Activated CD4-positive, alpha-beta T cell treated with anti-CD3 and anti-CD28 coated beads, Interleukin-2, amount 10 ng/mL, durations not matched to agents 24 days and 14 days (primary cell): ENCODE measurements at regions of chr1 and their contacts with region 1.

Region 1: DNA sequence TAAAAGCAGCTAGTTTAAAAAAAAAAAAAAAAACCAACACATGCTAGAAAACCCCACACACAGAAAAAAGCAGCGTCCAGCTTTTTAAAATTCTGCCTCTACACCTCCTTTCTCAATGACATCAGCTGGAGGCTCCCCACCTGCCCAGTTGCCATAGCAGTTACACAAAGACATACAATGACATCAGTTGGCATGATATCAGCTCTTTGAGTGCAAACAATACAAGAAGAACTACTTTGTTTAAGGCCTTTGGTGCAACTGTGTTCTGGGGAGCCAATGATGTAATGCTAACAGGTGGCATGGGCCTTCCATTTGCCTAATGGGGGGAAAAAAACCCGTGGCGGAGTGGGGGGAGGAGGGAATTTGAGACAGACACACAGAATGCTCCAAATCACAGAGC is 32.9 kb downstream of the DUSP10 start:
- DNase-seq: peak; percentile 85
- H3K4me3 Mint-ChIP-seq: peak overlapping the region; percentile 28
- H3K27ac Mint-ChIP-seq: peak overlapping the region; percentile 90
- H3K4me1 Mint-ChIP-seq: peaks cover 63% of the 10 kb centered on the region
- H3K27me3 Mint-ChIP-seq: no peaks in the 10 kb centered on the region

Region 2: GRCh38 chr1:221435504-221435904 is 273.5 kb before region 1 on chr1:
- intact Hi-C with region 1: loop called (anchors 1 kb)
- DNase-seq: peak; percentile 67
- H3K4me3 Mint-ChIP-seq: no peak overlapping the region
- H3K27ac Mint-ChIP-seq: no peak overlapping the region
- H3K4me1 Mint-ChIP-seq: peaks cover 22% of the 10 kb centered on the region
- H3K27me3 Mint-ChIP-seq: peaks cover 11% of the 10 kb centered on the region

Region 3: DNA sequence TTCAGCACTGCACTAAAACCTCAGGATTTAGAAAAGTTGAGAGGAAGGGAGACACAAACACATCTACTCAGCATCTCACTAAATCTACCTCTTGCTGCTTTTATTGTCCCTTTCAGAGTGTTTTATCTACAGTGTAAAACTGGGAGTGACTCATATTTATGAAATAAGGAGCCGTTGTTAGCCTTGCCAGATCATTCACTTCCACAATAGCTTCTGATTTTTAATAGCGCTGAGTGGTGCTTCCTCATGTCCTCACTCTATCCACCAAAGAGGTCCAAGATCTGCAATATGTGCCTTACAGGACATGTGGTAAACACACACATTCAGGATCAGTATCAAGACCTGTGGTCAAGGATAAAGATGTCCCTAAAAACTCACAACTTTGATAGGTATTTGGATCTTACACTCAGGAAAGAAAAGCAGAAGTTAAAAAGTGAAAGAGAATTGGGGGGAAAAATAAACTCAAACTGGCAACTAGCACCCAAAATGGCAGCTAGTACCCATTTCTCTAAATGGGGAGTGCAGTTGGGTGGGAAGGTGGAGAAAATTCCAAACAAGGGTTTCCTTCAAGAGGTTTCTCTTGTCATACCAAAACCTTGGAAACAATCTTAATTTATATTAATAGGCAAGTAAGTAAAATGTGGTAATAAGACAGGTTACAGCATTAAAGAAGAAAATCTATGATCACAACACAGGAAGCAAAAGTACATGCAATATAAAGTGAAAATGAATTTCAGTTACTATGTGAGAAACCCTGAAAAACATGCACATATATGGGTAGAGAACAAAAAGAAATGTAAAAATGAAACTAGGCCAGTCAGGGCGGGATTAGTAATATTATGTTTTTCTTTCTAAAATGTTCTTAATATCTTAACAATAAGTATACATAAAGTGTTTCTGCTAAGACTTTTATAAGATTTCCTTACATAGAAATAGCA is 17.0 kb after region 1 on chr1:
- intact Hi-C with region 1: loop called (anchors 1 kb)
- DNase-seq: no peak
- H3K4me3 Mint-ChIP-seq: peak overlapping the region; percentile 65
- H3K27ac Mint-ChIP-seq: peak overlapping the region; percentile 93
- H3K4me1 Mint-ChIP-seq: peaks cover 71% of the 10 kb centered on the region
- H3K27me3 Mint-ChIP-seq: no peaks in the 10 kb centered on the region

Region 4: GRCh38 chr1:221783936-221784335 is 74.9 kb after region 1 on chr1:
- intact Hi-C with region 1: no loop called
- DNase-seq: peak; percentile 74
- H3K4me3 Mint-ChIP-seq: peak overlapping the region; percentile 54
- H3K27ac Mint-ChIP-seq: peak overlapping the region; percentile 52
- H3K4me1 Mint-ChIP-seq: peaks cover 61% of the 10 kb centered on the region
- H3K27me3 Mint-ChIP-seq: no peaks in the 10 kb centered on the region

Region 5: GRCh38 chr1:221794079-221794670 is 85.2 kb after region 1 on chr1:
- intact Hi-C with region 1: loop called (anchors 1 kb)
- DNase-seq: peak; percentile 77
- H3K4me3 Mint-ChIP-seq: peak overlapping the region; percentile 45
- H3K27ac Mint-ChIP-seq: peak overlapping the region; percentile 90
- H3K4me1 Mint-ChIP-seq: peaks cover 36% of the 10 kb centered on the region
- H3K27me3 Mint-ChIP-seq: no peaks in the 10 kb centered on the region

Region 6: GRCh38 chr1:221923929-221924598 is 215.1 kb after region 1 on chr1:
- intact Hi-C with region 1: no loop called
- DNase-seq: no peak
- H3K4me3 Mint-ChIP-seq: no peak overlapping the region
- H3K27ac Mint-ChIP-seq: no peak overlapping the region
- H3K4me1 Mint-ChIP-seq: peaks cover 2% of the 10 kb centered on the region
- H3K27me3 Mint-ChIP-seq: peaks cover under 1% of the 10 kb centered on the region

Region 7: GRCh38 chr1:221994274-221994698 is 285.3 kb after region 1 on chr1:
- intact Hi-C with region 1: loop called (anchors 1 kb)
- DNase-seq: peak; percentile 65
- H3K4me3 Mint-ChIP-seq: peak overlapping the region; percentile 23
- H3K27ac Mint-ChIP-seq: peak overlapping the region; percentile 92
- H3K4me1 Mint-ChIP-seq: peaks cover 26% of the 10 kb centered on the region
- H3K27me3 Mint-ChIP-seq: no peaks in the 10 kb centered on the region